Naive thymus-derived CD4-positive, alpha-beta T cell (primary cell): ENCODE measurements at regions of chr5 and their contacts with region 1.

Region 1: GRCh38 chr5:74640450-74640953 is at the start of gene ENC1:
- DNase-seq: peak; percentile 64 to 88 (median 75)
- ATAC-seq: peak; percentile 86
- H3K4me3 ChIP-seq: peak within 1 kb of the TSS; percentile 42
- H3K4me3 Mint-ChIP-seq: peak within 1 kb of the TSS; percentile 81 to 99 (median 92)
- H3K27ac ChIP-seq: peak within 1 kb of the TSS; percentile 72
- H3K27ac Mint-ChIP-seq: peak within 1 kb of the TSS in 8 of 9 donors; percentile 42 to 90 (median 74)
- H3K4me1 ChIP-seq: peaks cover 3 to 4% of the 10 kb centered on the region in 2 donors
- H3K4me1 Mint-ChIP-seq: peaks cover 28 to 45% (median 31%) of the 10 kb centered on the region in 7 donors
- H3K27me3 ChIP-seq: no peaks in the 10 kb centered on the region
- H3K27me3 Mint-ChIP-seq: peaks cover 0 to 79% (median 34%) of the 10 kb centered on the region in 5 donors
- total RNA-seq, gene ENC1: 1.3 to 18.1 (median 1.6) TPM

Region 2: GRCh38 chr5:73902327-73903051 is 738.0 kb before region 1 on chr5:
- CTCF ChIA-PET with region 1: interaction called, 22 read pairs
- POLR2A ChIA-PET with region 1: no interaction called
- intact Hi-C with region 1: loop called (anchors 2 kb)
- DNase-seq: peak in 7 of 9 donors; percentile 10 to 56 (median 51)
- ATAC-seq: no peak
- H3K4me3 ChIP-seq: no peak overlapping the region
- H3K4me3 Mint-ChIP-seq: no peak overlapping the region
- H3K27ac ChIP-seq: no peak overlapping the region
- H3K27ac Mint-ChIP-seq: no peak overlapping the region
- H3K4me1 ChIP-seq: no peaks in the 10 kb centered on the region
- H3K4me1 Mint-ChIP-seq: peaks cover 0 to 5% (median 0%) of the 10 kb centered on the region in 7 donors
- H3K27me3 ChIP-seq: no peaks in the 10 kb centered on the region
- H3K27me3 Mint-ChIP-seq: peaks cover 9 to 35% (median 29%) of the 10 kb centered on the region in 5 donors

Region 3: GRCh38 chr5:74294231-74294705 is 346.2 kb before region 1 on chr5:
- CTCF ChIA-PET with region 1: no interaction called
- POLR2A ChIA-PET with region 1: no interaction called
- intact Hi-C with region 1: loop called in 1 of 2 experiments (anchors 10 kb)
- DNase-seq: no peak
- ATAC-seq: peak; percentile 29
- H3K4me3 ChIP-seq: no peak overlapping the region
- H3K4me3 Mint-ChIP-seq: no peak overlapping the region
- H3K27ac ChIP-seq: no peak overlapping the region
- H3K27ac Mint-ChIP-seq: no peak overlapping the region
- H3K4me1 ChIP-seq: no peaks in the 10 kb centered on the region
- H3K4me1 Mint-ChIP-seq: no peaks in the 10 kb centered on the region
- H3K27me3 ChIP-seq: no peaks in the 10 kb centered on the region
- H3K27me3 Mint-ChIP-seq: peaks cover 0 to 17% (median 7%) of the 10 kb centered on the region in 5 donors

Region 4: DNA sequence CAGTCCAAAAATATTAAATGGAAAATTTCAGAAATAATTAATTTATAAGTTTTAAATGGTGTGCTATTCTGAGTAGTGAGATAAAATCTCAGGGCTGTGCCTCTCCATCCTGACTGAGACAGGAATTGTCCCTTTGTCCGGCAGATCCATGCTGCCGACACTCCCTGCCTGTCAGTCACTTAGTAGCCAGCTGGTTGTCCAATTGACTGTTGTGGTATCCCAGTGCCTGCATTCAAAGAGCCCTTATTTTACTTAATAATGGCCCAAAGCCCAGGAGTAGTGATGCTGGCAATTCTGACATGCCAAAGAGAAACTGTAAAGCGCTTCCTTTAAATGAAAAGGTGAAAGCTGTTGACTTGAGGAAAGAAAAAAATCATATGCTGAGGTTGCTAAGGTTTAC is 157.5 kb before region 1 on chr5:
- CTCF ChIA-PET with region 1: no interaction called
- POLR2A ChIA-PET with region 1: no interaction called
- intact Hi-C with region 1: loop called in 1 of 2 experiments (anchors 10 kb)
- DNase-seq: no peak
- ATAC-seq: no peak
- H3K4me3 ChIP-seq: no peak overlapping the region
- H3K4me3 Mint-ChIP-seq: no peak overlapping the region
- H3K27ac ChIP-seq: no peak overlapping the region
- H3K27ac Mint-ChIP-seq: peak overlapping the region in 1 of 9 donors; percentile 77
- H3K4me1 ChIP-seq: no peaks in the 10 kb centered on the region
- H3K4me1 Mint-ChIP-seq: no peaks in the 10 kb centered on the region
- H3K27me3 ChIP-seq: no peaks in the 10 kb centered on the region
- H3K27me3 Mint-ChIP-seq: peaks cover 0 to 4% (median 0%) of the 10 kb centered on the region in 5 donors

Region 5: GRCh38 chr5:74684900-74685851 is 44.7 kb after region 1 on chr5 and contains the start of gene HEXB:
- CTCF ChIA-PET with region 1: interaction called, 3 read pairs
- POLR2A ChIA-PET with region 1: no interaction called
- intact Hi-C with region 1: loop called (anchors 2 kb)
- DNase-seq: peak; percentile 55 to 89 (median 69)
- ATAC-seq: peak; percentile 91
- H3K4me3 ChIP-seq: peak within 1 kb of the TSS; percentile 86
- H3K4me3 Mint-ChIP-seq: peak within 1 kb of the TSS; percentile 76 to 92 (median 86)
- H3K27ac ChIP-seq: peak within 1 kb of the TSS; percentile 78
- H3K27ac Mint-ChIP-seq: peak within 1 kb of the TSS; percentile 76 to 92 (median 86)
- H3K4me1 ChIP-seq: peaks cover 7 to 13% of the 10 kb centered on the region in 2 donors
- H3K4me1 Mint-ChIP-seq: peaks cover 16 to 34% (median 30%) of the 10 kb centered on the region in 7 donors
- H3K27me3 ChIP-seq: no peaks in the 10 kb centered on the region
- H3K27me3 Mint-ChIP-seq: peaks cover 0 to 17% (median 0%) of the 10 kb centered on the region in 5 donors
- total RNA-seq, gene HEXB: 37.7 to 88.9 (median 64.2) TPM